IMR-90 (cell line): ENCODE measurements at regions of chr2 and their contacts with region 1.

Region 1: GRCh38 chr2:160652236-160652635 is 158.6 kb upstream of the RBMS1 start:
- DNase-seq: no peak
- ATAC-seq: no peak
- H3K4me3 ChIP-seq: no peak overlapping the region
- H3K27ac ChIP-seq: no peak overlapping the region
- H3K4me1 ChIP-seq: peaks cover 1% of the 10 kb centered on the region; the same call in 1 of the 2 replicates
- H3K27me3 ChIP-seq: no peaks in the 10 kb centered on the region
- CTCF ChIP-seq: no peak
- POLR2A ChIP-seq: no peak
- RAD21 ChIP-seq: no peak

Region 2: GRCh38 chr2:160157861-160158829 is 494.1 kb before region 1 on chr2:
- CTCF ChIA-PET with region 1: no interaction called
- POLR2A ChIA-PET with region 1: no interaction called
- dilution Hi-C with region 1: no loop called
- in situ Hi-C with region 1: no loop called
- intact Hi-C with region 1: no loop called
- DNase-seq: peak; percentile 37
- ATAC-seq: no peak
- H3K4me3 ChIP-seq: no peak overlapping the region
- H3K27ac ChIP-seq: no peak overlapping the region
- H3K4me1 ChIP-seq: no peaks in the 10 kb centered on the region
- H3K27me3 ChIP-seq: no peaks in the 10 kb centered on the region
- CTCF ChIP-seq: no peak
- POLR2A ChIP-seq: no peak
- RAD21 ChIP-seq: no peak

Region 3: GRCh38 chr2:160465406-160465805 is 186.8 kb before region 1 on chr2:
- CTCF ChIA-PET with region 1: no interaction called
- POLR2A ChIA-PET with region 1: no interaction called
- dilution Hi-C with region 1: no loop called
- in situ Hi-C with region 1: no loop called
- intact Hi-C with region 1: no loop called
- DNase-seq: no peak
- ATAC-seq: peak; percentile 61
- H3K4me3 ChIP-seq: no peak overlapping the region
- H3K27ac ChIP-seq: no peak overlapping the region; the same call in 1 of the 2 replicates
- H3K4me1 ChIP-seq: peaks cover 16% of the 10 kb centered on the region
- H3K27me3 ChIP-seq: no peaks in the 10 kb centered on the region
- CTCF ChIP-seq: no peak
- POLR2A ChIP-seq: no peak
- RAD21 ChIP-seq: no peak

Region 4: DNA sequence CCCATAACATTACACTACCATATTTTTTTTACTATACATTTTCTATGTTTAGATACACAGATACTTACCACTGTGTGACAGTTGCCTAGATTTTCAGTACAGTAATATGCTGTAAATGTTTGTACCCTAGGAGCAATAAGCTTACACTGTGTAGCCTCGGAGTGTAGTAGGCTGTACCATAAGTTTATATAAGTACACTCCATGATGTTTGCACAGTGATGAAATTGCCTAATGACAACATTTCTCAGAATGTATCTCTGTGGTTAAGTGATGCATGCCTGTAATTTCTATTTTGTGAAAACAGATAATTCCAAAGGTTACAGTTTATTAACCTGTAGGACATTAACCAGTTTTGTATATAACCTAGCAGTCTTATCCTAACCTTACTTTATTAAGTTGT is 30.5 kb before region 1 on chr2:
- CTCF ChIA-PET with region 1: no interaction called
- POLR2A ChIA-PET with region 1: no interaction called
- dilution Hi-C with region 1: no loop called
- in situ Hi-C with region 1: no loop called
- intact Hi-C with region 1: loop called (anchors 1 kb)
- DNase-seq: peak; percentile 68
- ATAC-seq: peak; percentile 92
- H3K4me3 ChIP-seq: no peak overlapping the region
- H3K27ac ChIP-seq: no peak overlapping the region
- H3K4me1 ChIP-seq: 0 out of 2 replicates have a peak, but pooled peaks cover 2% of the 10 kb centered on the region
- H3K27me3 ChIP-seq: no peaks in the 10 kb centered on the region
- CTCF ChIP-seq: no peak
- POLR2A ChIP-seq: no peak
- RAD21 ChIP-seq: no peak